ENCODE measurements at regions of chr3 and their contacts with region 1.

Region 1: DNA sequence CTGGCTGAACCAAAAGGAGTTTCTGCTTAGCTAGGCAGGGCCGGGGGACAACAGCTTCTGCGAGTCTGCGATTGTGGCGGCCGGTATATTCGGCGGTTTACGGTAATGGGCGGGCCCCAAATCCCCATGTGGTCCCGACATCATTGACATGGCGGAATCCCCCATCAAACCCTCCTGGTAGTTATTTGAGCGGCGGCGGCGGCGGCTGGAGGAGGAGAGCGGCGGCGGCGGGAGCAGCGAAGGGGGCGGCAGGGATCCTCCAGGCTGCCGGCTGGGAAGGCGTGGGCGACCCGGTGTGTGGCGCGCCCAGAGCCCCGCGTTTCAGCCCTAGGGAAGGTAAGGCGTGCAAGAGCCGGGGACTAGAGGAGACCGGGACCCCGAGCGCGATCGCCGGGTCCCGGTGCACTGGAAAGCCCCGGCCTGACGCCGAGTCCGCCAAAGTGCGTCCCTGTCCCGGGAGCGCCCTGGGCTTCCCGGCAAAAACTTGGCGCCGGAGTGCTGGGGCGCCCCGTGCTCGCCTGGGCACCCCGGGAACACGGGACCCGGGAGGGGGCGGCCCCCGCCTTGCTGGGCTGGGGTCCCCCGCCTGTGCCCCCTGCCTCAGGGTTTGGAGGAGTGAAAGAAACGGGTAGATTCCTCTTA is at the start of gene FNDC3B:
- DNase-seq: peak; percentile 97
- H3K4me3 ChIP-seq: peak within 1 kb of the TSS; percentile 60 to 97 (median 94)
- H3K27ac ChIP-seq: peak within 1 kb of the TSS; percentile 87 to 100 (median 98)
- H3K4me1 ChIP-seq: peaks cover 0 to 40% (median 26%) of the 10 kb centered on the region in 4 donors
- H3K27me3 ChIP-seq: no peaks in the 10 kb centered on the region
- CTCF ChIP-seq: no peak
- EP300 ChIP-seq: peak in 1 of 4 donors; percentile 59
- POLR2A ChIP-seq: peak; percentile 83 to 86
- total RNA-seq, gene FNDC3B: 50.3 to 93.9 (median 63.0) TPM

Region 2: DNA sequence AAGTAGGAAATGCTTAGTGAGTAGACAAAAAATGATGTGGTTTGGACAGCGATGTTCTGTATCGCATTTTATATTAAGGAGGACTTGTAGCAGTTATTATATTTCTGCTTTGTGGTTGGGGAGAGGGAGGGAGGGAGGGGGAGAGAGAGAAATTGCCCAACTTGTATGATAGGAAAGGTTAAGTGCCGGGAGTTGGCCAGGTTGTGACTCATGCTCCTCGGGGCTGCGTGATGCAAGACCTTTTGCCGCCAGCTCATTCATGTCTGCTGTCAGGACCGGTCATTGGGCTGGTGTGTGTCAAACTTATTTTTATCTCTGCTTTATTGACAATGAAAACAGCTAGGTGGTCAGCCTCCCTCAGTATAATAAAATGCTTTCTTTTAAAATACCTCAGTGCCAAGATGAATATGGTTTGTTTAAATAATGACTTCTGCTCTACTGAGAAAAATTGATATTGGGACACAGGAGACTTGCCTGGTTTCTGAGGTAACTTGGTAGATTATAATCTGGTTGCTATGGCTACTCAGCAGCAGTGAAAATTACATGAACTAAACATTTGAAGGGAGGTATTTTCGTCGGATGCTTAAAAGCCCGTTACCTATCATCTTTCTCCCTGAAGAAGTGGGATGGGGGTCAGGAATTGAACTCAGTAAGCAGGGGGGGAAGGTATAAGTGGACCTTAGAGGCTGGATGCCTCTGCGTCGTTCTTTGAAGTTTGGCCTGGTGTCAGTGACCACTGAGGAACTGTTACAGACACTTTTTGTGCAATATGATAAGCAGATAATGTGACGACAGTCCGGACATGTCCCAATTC is 90.5 kb after region 1 on chr3:
- intact Hi-C with region 1: loop called (anchors 5 kb)
- DNase-seq: peak; percentile 97
- H3K4me3 ChIP-seq: no peak overlapping the region
- H3K27ac ChIP-seq: peak overlapping the region; percentile 38 to 86 (median 74)
- H3K4me1 ChIP-seq: peaks cover 0 to 78% (median 50%) of the 10 kb centered on the region in 4 donors
- H3K27me3 ChIP-seq: no peaks in the 10 kb centered on the region
- CTCF ChIP-seq: no peak
- EP300 ChIP-seq: peak; percentile 20 to 72 (median 46)
- POLR2A ChIP-seq: no peak

Region 3: GRCh38 chr3:172201136-172201869 is 161.7 kb after region 1 on chr3:
- intact Hi-C with region 1: loop called (anchors 5 kb)
- DNase-seq: peak; percentile 89
- H3K4me3 ChIP-seq: no peak overlapping the region
- H3K27ac ChIP-seq: peak overlapping the region; percentile 71 to 88 (median 77)
- H3K4me1 ChIP-seq: peaks cover 0 to 61% (median 46%) of the 10 kb centered on the region in 4 donors
- H3K27me3 ChIP-seq: no peaks in the 10 kb centered on the region
- CTCF ChIP-seq: no peak
- EP300 ChIP-seq: peak in 1 of 4 donors; percentile 34
- POLR2A ChIP-seq: no peak

Region 4: DNA sequence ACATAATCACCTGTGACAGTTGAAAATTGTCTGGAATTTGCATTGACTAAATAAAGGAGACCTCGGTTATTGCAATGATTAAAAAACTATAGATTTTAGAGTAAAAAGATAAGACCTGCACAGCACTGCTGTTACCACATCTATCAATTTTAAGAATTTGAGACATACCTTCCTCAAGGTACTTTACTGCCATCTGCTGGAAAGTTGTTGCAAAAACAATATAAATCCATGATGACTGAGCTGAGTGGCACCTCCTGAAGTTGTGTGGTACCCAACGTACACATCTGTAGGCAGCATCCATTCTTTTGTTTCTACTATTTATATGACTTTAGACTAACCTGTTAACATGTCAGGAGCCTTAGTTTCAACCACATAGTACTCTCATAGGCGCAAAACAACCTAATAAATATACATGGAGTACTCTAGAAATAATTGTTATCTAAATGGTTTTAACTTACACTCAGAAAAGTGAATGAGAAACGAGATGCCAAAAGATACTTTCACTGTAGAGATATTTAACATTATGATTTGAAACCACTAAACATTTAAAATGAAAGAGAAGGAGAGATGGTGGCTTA is 302.0 kb after region 1 on chr3:
- intact Hi-C with region 1: loop called (anchors 5 kb)
- DNase-seq: no peak
- H3K4me3 ChIP-seq: no peak overlapping the region
- H3K27ac ChIP-seq: no peak overlapping the region
- H3K4me1 ChIP-seq: no peaks in the 10 kb centered on the region
- H3K27me3 ChIP-seq: no peaks in the 10 kb centered on the region
- CTCF ChIP-seq: peak in 2 of 4 experiments; percentile 51 to 74
- EP300 ChIP-seq: no peak
- POLR2A ChIP-seq: no peak

Measured in sigmoid colon (tissue), 7 donors.